ENCODE measurements at regions of chr4 and their contacts with region 1.

Region 1: DNA sequence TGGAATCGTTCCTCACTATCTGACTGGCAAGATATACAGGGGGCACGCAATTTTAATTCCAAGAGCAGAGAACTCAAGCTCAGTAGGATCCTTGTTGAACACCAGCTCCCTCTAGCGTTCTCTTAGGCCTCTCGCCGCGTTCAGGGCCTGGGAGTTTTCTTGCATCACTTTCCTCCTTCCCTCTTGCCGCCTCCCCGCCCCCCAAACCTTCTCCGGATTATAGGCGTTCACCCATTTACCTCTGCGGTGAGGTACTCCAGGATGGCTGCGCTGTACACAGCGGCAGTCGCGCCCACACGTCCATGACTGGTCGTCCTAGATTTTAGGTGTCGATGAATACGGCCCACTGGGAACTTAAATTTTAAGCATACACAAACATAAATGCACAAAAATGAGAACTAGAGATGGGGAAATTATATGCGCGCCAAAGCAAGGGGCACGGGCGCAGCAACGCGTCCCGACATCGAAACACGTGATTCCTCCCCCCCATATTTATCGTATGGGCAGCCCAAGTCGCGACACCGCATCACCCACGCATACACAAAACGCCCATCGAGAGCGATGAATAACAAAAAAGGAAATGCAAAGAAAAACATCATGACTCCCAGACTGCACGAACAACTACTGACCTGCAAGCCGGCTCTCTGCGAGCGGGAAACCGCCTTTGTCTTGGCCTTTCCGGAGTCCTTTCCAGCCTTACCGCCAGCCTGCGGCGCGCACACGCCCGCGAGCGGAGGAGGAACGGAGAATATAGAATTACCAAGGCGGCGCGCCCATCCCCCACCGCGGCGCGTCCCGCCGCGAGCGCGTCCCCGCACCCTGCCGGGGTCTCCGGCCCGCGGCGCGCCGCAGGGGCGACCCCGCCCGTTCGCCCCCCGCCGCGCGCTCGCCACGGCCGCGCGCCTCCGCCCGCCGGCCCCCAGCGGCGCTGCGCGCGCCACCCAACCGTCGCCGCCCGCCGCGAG is 759 bp downstream of the H2AZ1 start:
- DNase-seq: peak; percentile 97
- H3K4me3 ChIP-seq: peak overlapping the region; percentile 69
- H3K27ac ChIP-seq: peak overlapping the region; percentile 94
- H3K4me1 ChIP-seq: peaks cover 14% of the 10 kb centered on the region
- H3K27me3 ChIP-seq: no peaks in the 10 kb centered on the region
- CTCF ChIP-seq: peak; percentile 74

Region 2: GRCh38 chr4:99894161-99894997 is 54.9 kb before region 1 on chr4 and contains the start of gene LAMTOR3:
- intact Hi-C with region 1: loop called (anchors 5 kb)
- DNase-seq: peak; percentile 93
- H3K4me3 ChIP-seq: peak within 1 kb of the TSS; percentile 84
- H3K27ac ChIP-seq: peak within 1 kb of the TSS; percentile 66
- H3K4me1 ChIP-seq: no peaks in the 10 kb centered on the region
- H3K27me3 ChIP-seq: no peaks in the 10 kb centered on the region
- CTCF ChIP-seq: no peak
- total RNA-seq, gene LAMTOR3: 45.6 to 67.2 TPM

Measured in colonic mucosa (tissue), 4 donors.